ENCODE measurements at regions of chr5 and their contacts with region 1.

Region 1: GRCh38 chr5:79857714-79858409 is 133.2 kb downstream of the MTX3 start:
- DNase-seq: peak; percentile 32 to 56
- ATAC-seq: peak; percentile 41 to 83; a peak in 4 of 6 replicates
- H3K4me3 ChIP-seq: no peak overlapping the region
- H3K27ac ChIP-seq: no peak overlapping the region
- H3K4me1 ChIP-seq: no peaks in the 10 kb centered on the region
- CTCF ChIP-seq: peak; percentile 87
- EP300 ChIP-seq: no peak
- POLR2A ChIP-seq: no peak
- RAD21 ChIP-seq: peak; percentile 75 to 78

Region 2: DNA sequence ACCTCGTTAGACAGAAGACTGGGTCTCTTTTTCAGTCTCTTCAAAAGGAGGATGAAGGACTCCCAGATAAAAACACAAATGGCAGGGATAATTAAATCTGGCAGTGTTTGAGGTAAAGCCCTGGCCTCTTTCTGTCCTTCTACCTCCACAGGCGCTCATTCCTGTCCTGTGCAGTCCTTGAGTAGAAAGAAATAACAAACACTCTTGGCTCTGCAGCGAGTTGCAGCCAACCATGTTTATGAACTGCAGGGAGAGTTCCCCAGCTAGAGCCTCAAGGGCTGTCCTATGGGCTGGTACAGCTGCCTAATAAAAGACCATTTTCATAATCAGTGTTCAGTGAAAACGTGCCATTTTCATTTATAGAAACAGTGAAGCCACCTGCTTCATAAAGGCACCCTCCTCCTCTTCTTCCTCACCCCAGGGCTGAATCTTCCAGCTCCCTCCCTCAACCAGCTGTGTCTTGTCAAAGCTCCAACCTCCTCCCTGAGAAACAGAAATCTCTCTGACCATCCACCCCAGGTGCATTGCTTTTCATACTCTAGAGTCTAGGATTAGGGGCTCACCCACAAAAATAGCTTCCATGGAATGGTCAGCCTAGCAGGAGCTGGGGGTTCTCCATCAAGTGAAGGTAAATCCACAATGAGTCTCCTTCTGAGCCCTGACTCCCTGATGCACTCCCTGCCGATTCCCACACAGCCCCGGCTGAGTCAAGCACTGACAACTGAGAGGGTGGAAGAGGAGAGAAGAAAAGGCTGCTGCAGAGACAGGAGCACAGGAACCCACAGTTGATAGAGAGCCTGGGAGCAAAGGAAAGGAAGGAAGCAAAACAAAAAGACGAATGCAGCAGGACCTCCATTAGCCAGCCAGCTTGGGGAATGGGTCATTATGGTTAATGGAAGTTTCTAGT is 17.5 kb before region 1 on chr5:
- CTCF ChIA-PET with region 1: interaction called, 10 read pairs
- POLR2A ChIA-PET with region 1: no interaction called
- DNase-seq: no peak
- ATAC-seq: no peak
- H3K4me3 ChIP-seq: no peak overlapping the region
- H3K27ac ChIP-seq: no peak overlapping the region
- H3K4me1 ChIP-seq: no peaks in the 10 kb centered on the region
- CTCF ChIP-seq: no peak
- EP300 ChIP-seq: no peak
- POLR2A ChIP-seq: no peak
- RAD21 ChIP-seq: no peak

Region 3: GRCh38 chr5:80041527-80041926 is 183.7 kb after region 1 on chr5:
- CTCF ChIA-PET with region 1: no interaction called
- POLR2A ChIA-PET with region 1: no interaction called
- DNase-seq: no peak
- ATAC-seq: no peak
- H3K4me3 ChIP-seq: no peak overlapping the region
- H3K27ac ChIP-seq: no peak overlapping the region
- H3K4me1 ChIP-seq: no peaks in the 10 kb centered on the region
- CTCF ChIP-seq: no peak
- EP300 ChIP-seq: no peak
- POLR2A ChIP-seq: no peak
- RAD21 ChIP-seq: no peak